ENCODE measurements at regions of chr9 and their contacts with region 1.

Region 1: GRCh38 chr9:95268681-95269080 is 48.8 kb downstream of the FANCC start:
- DNase-seq: peak; percentile 60 to 68
- H3K4me3 ChIP-seq: no peak overlapping the region
- H3K4me3 Mint-ChIP-seq: peak overlapping the region; percentile 61
- H3K27ac Mint-ChIP-seq: peak overlapping the region; percentile 83
- H3K4me1 ChIP-seq: peaks cover 31% of the 10 kb centered on the region
- H3K4me1 Mint-ChIP-seq: peaks cover 33% of the 10 kb centered on the region
- H3K27me3 ChIP-seq: no peaks in the 10 kb centered on the region
- H3K27me3 Mint-ChIP-seq: no peaks in the 10 kb centered on the region
- CTCF ChIP-seq: peak; percentile 36 to 53

Region 2: DNA sequence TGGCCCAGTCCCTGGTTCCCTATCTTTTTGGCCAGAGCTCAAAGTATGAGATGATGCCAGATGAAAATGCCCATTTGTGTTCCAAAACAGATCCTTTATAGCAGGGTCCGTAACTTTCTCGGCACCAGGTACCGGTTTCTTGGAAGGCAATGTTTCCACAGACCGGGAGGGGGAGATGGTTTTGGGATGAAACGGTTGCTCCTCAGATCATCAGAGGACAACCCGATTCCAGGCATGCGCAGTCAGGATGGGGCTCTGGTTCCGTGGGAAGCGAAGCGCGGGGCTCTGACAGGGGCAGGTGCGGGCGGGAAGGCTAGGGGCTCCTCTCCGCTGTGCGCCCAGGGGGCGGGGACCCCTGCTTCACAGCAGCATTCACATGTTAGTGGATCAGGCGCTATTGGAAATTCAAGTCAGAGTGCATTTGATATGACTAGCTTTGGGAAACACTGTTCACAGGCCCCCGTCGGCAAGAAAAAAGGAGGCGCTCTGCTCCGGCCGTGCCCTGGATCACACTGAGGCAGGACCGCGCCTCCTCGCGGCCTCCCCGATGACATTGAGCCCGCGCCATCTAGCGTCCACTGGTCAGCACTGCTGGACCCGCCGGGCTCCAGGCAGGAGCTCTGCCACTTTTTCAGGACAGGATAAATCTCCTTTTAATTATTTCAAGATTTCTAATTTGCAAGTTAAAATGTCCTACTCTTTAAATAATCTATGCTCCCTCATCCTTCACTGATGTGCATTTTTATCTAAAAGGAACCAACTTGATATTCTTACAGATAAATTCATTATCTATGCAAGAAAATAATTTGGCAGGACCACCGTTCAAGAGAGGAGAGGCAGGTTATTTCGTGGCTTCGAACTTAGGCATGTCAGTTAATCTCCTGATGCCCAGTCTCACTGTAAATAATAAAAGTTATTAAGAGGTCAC is 141.2 kb before region 1 on chr9:
- CTCF ChIA-PET with region 1: interaction called, 4 read pairs
- POLR2A ChIA-PET with region 1: no interaction called
- intact Hi-C with region 1: loop called (anchors 1 kb)
- DNase-seq: peak; percentile 67 to 77
- H3K4me3 ChIP-seq: no peak overlapping the region
- H3K4me3 Mint-ChIP-seq: no peak overlapping the region
- H3K27ac Mint-ChIP-seq: no peak overlapping the region
- H3K4me1 ChIP-seq: no peaks in the 10 kb centered on the region
- H3K4me1 Mint-ChIP-seq: peaks cover 13% of the 10 kb centered on the region
- H3K27me3 ChIP-seq: no peaks in the 10 kb centered on the region
- H3K27me3 Mint-ChIP-seq: no peaks in the 10 kb centered on the region
- CTCF ChIP-seq: peak; percentile 71 to 95

Region 3: DNA sequence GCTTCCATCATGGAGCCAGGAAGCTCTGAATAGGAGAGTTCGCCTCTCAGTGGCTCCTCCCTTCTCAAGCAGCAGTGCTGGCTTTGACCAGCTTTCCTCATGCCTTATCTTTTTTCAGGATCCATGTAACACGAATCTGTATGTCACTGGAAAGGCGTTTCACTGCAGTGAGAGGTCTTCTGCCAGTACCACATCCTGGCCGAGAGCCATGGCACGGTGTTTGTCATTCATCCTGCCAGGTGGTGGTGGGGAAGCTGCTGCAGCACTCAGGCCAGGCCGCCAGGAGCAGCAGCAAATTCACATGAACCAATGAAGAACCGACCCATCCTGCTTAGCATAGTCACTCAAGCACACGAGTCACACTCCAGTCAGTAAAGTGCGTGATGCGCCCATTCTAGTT is 130.2 kb before region 1 on chr9:
- CTCF ChIA-PET with region 1: no interaction called
- POLR2A ChIA-PET with region 1: no interaction called
- intact Hi-C with region 1: loop called (anchors 2 kb)
- DNase-seq: no peak
- H3K4me3 ChIP-seq: no peak overlapping the region
- H3K4me3 Mint-ChIP-seq: no peak overlapping the region
- H3K27ac Mint-ChIP-seq: no peak overlapping the region
- H3K4me1 ChIP-seq: no peaks in the 10 kb centered on the region
- H3K4me1 Mint-ChIP-seq: no peaks in the 10 kb centered on the region
- H3K27me3 ChIP-seq: no peaks in the 10 kb centered on the region
- H3K27me3 Mint-ChIP-seq: no peaks in the 10 kb centered on the region
- CTCF ChIP-seq: no peak

Region 4: GRCh38 chr9:95167998-95168397 is 100.7 kb before region 1 on chr9:
- CTCF ChIA-PET with region 1: interaction called, 15 read pairs
- POLR2A ChIA-PET with region 1: no interaction called
- intact Hi-C with region 1: no loop called
- DNase-seq: peak; percentile 69 to 83
- H3K4me3 ChIP-seq: no peak overlapping the region
- H3K4me3 Mint-ChIP-seq: no peak overlapping the region
- H3K27ac Mint-ChIP-seq: no peak overlapping the region
- H3K4me1 ChIP-seq: no peaks in the 10 kb centered on the region
- H3K4me1 Mint-ChIP-seq: no peaks in the 10 kb centered on the region
- H3K27me3 ChIP-seq: no peaks in the 10 kb centered on the region
- H3K27me3 Mint-ChIP-seq: no peaks in the 10 kb centered on the region
- CTCF ChIP-seq: peak; percentile 80 to 83

Region 5: GRCh38 chr9:95206143-95206542 is 62.5 kb before region 1 on chr9:
- CTCF ChIA-PET with region 1: no interaction called
- POLR2A ChIA-PET with region 1: no interaction called
- intact Hi-C with region 1: loop called (anchors 1 kb)
- DNase-seq: no peak
- H3K4me3 ChIP-seq: no peak overlapping the region
- H3K4me3 Mint-ChIP-seq: peak overlapping the region; percentile 66
- H3K27ac Mint-ChIP-seq: peak overlapping the region; percentile 53
- H3K4me1 ChIP-seq: peaks cover 38% of the 10 kb centered on the region
- H3K4me1 Mint-ChIP-seq: peaks cover 31% of the 10 kb centered on the region
- H3K27me3 ChIP-seq: no peaks in the 10 kb centered on the region
- H3K27me3 Mint-ChIP-seq: no peaks in the 10 kb centered on the region
- CTCF ChIP-seq: no peak

Region 6: GRCh38 chr9:95317119-95317892 is 48.6 kb after region 1 on chr9 and contains the start of gene FANCC:
- CTCF ChIA-PET with region 1: no interaction called
- POLR2A ChIA-PET with region 1: no interaction called
- intact Hi-C with region 1: loop called (anchors 2 kb)
- DNase-seq: peak; percentile 95 to 96
- H3K4me3 ChIP-seq: peak within 1 kb of the TSS; percentile 98
- H3K4me3 Mint-ChIP-seq: peak within 1 kb of the TSS; percentile 82
- H3K27ac Mint-ChIP-seq: peak within 1 kb of the TSS; percentile 98
- H3K4me1 ChIP-seq: peaks cover 12% of the 10 kb centered on the region; the same call in 1 of the 2 replicates
- H3K4me1 Mint-ChIP-seq: peaks cover 13% of the 10 kb centered on the region
- H3K27me3 ChIP-seq: no peaks in the 10 kb centered on the region
- H3K27me3 Mint-ChIP-seq: no peaks in the 10 kb centered on the region
- CTCF ChIP-seq: no peak
- total RNA-seq, gene FANCC: 24.3 and 29.2 TPM in 2 replicates

Region 7: GRCh38 chr9:95425910-95426551 is 157.3 kb after region 1 on chr9:
- CTCF ChIA-PET with region 1: no interaction called
- POLR2A ChIA-PET with region 1: no interaction called
- intact Hi-C with region 1: loop called (anchors 5 kb)
- DNase-seq: peak; percentile 64 to 73
- H3K4me3 ChIP-seq: peak overlapping the region; percentile 48
- H3K4me3 Mint-ChIP-seq: peak overlapping the region; percentile 92
- H3K27ac Mint-ChIP-seq: peak overlapping the region; percentile 85
- H3K4me1 ChIP-seq: no peaks in the 10 kb centered on the region
- H3K4me1 Mint-ChIP-seq: peaks cover 7% of the 10 kb centered on the region
- H3K27me3 ChIP-seq: no peaks in the 10 kb centered on the region
- H3K27me3 Mint-ChIP-seq: no peaks in the 10 kb centered on the region
- CTCF ChIP-seq: no peak

Measured in Caco-2 (cell line).